CD4-positive, alpha-beta T cell (primary cell): ENCODE measurements at regions of chr12 and their contacts with region 1.

Region 1: GRCh38 chr12:33718631-33719030 is 279.0 kb upstream of the SYT10 start:
- DNase-seq: no peak
- ATAC-seq: no peak
- H3K4me3 ChIP-seq: no peak overlapping the region
- H3K4me3 Mint-ChIP-seq: no peak overlapping the region
- H3K27ac ChIP-seq: no peak overlapping the region
- H3K27ac Mint-ChIP-seq: no peak overlapping the region
- H3K4me1 ChIP-seq: no peaks in the 10 kb centered on the region
- H3K4me1 Mint-ChIP-seq: no peaks in the 10 kb centered on the region
- H3K27me3 ChIP-seq: no peaks in the 10 kb centered on the region
- H3K27me3 Mint-ChIP-seq: no peaks in the 10 kb centered on the region
- CTCF ChIP-seq: no peak

Region 2: GRCh38 chr12:33759279-33759678 is 40.6 kb after region 1 on chr12:
- CTCF ChIA-PET with region 1: no interaction called
- POLR2A ChIA-PET with region 1: no interaction called
- intact Hi-C with region 1: loop called in 1 of 2 experiments (anchors 1 kb)
- DNase-seq: no peak
- ATAC-seq: no peak
- H3K4me3 ChIP-seq: no peak overlapping the region
- H3K4me3 Mint-ChIP-seq: no peak overlapping the region
- H3K27ac ChIP-seq: no peak overlapping the region
- H3K27ac Mint-ChIP-seq: no peak overlapping the region
- H3K4me1 ChIP-seq: no peaks in the 10 kb centered on the region
- H3K4me1 Mint-ChIP-seq: no peaks in the 10 kb centered on the region
- H3K27me3 ChIP-seq: no peaks in the 10 kb centered on the region
- H3K27me3 Mint-ChIP-seq: no peaks in the 10 kb centered on the region
- CTCF ChIP-seq: no peak

Region 3: DNA sequence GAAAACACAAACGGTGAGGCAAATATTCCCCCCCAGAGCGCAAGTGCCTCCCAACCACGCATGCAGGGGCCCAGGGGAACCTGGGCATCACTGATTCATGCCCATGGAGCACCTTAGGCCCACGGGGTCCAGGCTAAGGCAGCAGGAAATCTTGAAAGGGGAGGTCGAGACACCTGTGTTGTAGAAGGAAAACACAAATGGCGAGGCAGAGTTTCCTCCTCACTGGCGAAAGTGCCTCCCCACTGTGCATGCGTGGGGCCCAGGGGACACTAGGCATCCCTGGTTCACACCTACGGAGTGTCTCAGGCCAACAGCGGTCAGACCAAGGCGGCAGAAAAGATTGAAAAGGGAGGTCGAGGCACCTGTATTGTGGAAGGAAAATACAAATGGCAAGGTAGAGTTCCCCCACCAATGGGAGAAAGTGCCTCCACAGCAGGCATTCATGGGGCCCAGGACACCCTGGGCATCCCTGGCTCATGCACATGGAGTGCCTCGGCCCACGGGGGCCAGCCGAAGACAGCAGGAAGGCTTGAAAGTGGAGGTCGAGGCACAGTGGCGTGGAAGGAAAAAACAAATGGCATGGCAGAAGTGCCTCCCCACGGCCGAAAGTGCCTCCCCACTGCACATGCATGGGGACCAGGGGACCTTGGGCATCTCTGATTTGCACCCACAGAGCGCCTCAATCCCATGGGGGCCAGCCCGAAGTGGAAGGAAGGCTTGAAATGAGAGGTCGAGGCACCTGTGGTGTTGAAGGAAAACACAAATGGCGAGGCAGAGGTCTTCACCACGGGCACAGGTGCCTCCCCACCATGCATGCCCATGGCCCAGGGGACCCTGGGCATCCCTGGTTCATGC is 672.4 kb after region 1 on chr12:
- CTCF ChIA-PET with region 1: no interaction called
- POLR2A ChIA-PET with region 1: no interaction called
- intact Hi-C with region 1: no loop called
- DNase-seq: peak in 3 of 14 experiments; percentile 0 to 24 (median 1)
- ATAC-seq: no peak
- H3K4me3 ChIP-seq: no peak overlapping the region
- H3K4me3 Mint-ChIP-seq: no peak overlapping the region
- H3K27ac ChIP-seq: no peak overlapping the region
- H3K27ac Mint-ChIP-seq: no peak overlapping the region
- H3K4me1 ChIP-seq: no peaks in the 10 kb centered on the region
- H3K4me1 Mint-ChIP-seq: no peaks in the 10 kb centered on the region
- H3K27me3 ChIP-seq: peaks cover 0 to 2% of the 10 kb centered on the region in 2 experiments
- H3K27me3 Mint-ChIP-seq: no peaks in the 10 kb centered on the region
- CTCF ChIP-seq: no peak